ENCODE measurements at regions of chr11 and their contacts with region 1.

Region 1: DNA sequence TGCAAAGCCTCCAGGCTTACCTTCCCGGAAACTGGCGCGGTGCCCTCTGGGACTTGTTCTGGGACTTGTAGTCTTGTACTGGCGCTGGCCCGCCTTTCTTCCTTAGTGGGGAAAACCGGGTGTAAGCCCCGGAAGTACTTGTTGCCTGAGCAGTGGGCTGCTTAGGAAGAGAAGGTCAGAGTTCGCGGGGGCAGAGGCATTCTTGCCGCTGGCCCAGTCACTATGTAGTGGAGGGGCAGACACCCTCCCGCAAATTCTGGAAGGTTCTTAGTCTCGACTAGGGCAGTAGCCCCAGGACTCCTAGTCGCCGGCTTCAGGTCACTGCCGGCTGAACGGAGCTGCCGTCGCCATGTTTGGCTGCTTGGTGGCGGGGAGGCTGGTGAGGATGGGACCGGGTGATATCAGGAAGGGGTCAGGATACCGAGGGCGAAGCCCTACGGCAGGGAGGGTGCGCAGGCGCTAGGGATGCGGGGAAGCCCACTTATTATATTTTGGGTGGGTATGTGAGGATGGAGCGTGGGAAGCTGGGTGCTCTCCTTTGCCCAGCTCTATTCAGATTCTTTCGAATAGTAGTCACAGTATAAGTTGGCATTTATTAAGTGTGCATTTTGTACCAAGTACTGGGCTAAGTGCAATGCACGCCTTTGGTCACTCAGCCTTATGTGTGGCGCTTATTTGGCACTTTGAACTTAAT is at the start of gene HIKESHI:
- DNase-seq: peak; percentile 81 to 95 (median 90)
- ATAC-seq: peak; percentile 97
- H3K4me3 ChIP-seq: peak within 1 kb of the TSS; percentile 83
- H3K4me3 Mint-ChIP-seq: peak within 1 kb of the TSS; percentile 99
- H3K27ac ChIP-seq: peak within 1 kb of the TSS; percentile 58 to 85
- H3K27ac Mint-ChIP-seq: peak within 1 kb of the TSS; percentile 98
- H3K4me1 ChIP-seq: peaks cover 3% of the 10 kb centered on the region
- H3K4me1 Mint-ChIP-seq: peaks cover 33% of the 10 kb centered on the region
- H3K27me3 ChIP-seq: no peaks in the 10 kb centered on the region
- H3K27me3 Mint-ChIP-seq: no peaks in the 10 kb centered on the region
- CTCF ChIP-seq: no peak
- total RNA-seq, gene HIKESHI: 6.3 to 6.6 TPM

Region 2: DNA sequence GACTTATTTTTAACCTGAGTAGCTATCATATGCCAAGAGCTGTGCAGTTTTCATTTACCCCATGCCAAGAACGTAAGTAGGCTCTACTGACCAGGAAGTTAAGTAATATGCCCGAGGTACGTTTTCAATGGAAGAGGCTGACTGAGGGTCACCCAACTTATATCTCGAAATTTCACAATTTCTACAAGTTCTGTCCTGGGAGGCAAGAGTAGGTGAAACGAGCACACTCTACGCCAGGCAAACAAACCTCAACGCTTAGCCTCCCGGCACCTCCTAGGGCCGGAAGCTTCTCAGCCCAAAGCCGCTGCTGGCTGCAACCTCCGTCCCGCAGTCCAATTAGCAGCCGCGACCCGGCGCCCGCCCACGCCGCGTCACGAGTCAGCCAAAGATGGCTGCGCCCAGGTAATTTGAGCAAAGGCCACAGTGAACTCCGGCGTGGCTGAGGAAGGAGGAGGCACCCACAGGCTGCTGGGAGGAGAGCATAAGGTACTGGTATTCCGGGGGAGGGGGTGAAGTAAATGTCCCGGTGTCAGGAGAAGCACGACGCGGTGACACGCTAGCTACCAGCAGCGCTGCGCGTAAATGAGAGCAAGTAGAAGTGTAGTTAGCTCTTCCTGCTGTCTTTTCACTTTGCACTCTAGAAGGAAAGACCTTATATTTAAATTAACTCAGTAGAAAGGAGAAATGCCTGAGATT is 654.5 kb before region 1 on chr11 and contains the start of gene TMEM126A:
- CTCF ChIA-PET with region 1: no interaction called
- POLR2A ChIA-PET with region 1: interaction called, 3 read pairs
- intact Hi-C with region 1: loop called in 1 of 2 experiments (anchors 5 kb)
- DNase-seq: peak; percentile 81 to 95 (median 88)
- ATAC-seq: peak; percentile 99
- H3K4me3 ChIP-seq: peak within 1 kb of the TSS; percentile 84
- H3K4me3 Mint-ChIP-seq: peak within 1 kb of the TSS; percentile 97
- H3K27ac ChIP-seq: peak within 1 kb of the TSS; percentile 77 to 84
- H3K27ac Mint-ChIP-seq: peak within 1 kb of the TSS; percentile 89
- H3K4me1 ChIP-seq: peaks cover 20% of the 10 kb centered on the region
- H3K4me1 Mint-ChIP-seq: peaks cover 44% of the 10 kb centered on the region
- H3K27me3 ChIP-seq: peaks cover 0 to 8% of the 10 kb centered on the region in 2 experiments
- H3K27me3 Mint-ChIP-seq: peaks cover 23% of the 10 kb centered on the region
- CTCF ChIP-seq: no peak
- total RNA-seq, gene TMEM126A: 17.0 to 19.5 TPM

Region 3: GRCh38 chr11:86314646-86315045 is 12.4 kb after region 1 on chr11:
- CTCF ChIA-PET with region 1: no interaction called
- POLR2A ChIA-PET with region 1: no interaction called
- intact Hi-C with region 1: no loop called
- DNase-seq: no peak
- ATAC-seq: no peak
- H3K4me3 ChIP-seq: no peak overlapping the region
- H3K4me3 Mint-ChIP-seq: no peak overlapping the region
- H3K27ac ChIP-seq: no peak overlapping the region
- H3K27ac Mint-ChIP-seq: no peak overlapping the region
- H3K4me1 ChIP-seq: no peaks in the 10 kb centered on the region
- H3K4me1 Mint-ChIP-seq: peaks cover 37% of the 10 kb centered on the region
- H3K27me3 ChIP-seq: no peaks in the 10 kb centered on the region
- H3K27me3 Mint-ChIP-seq: no peaks in the 10 kb centered on the region
- CTCF ChIP-seq: no peak